ENCODE measurements at regions of chr13 and their contacts with region 1.

Region 1: GRCh38 chr13:30465585-30466357 is at the start of gene HMGB1:
- DNase-seq: peak; percentile 97
- H3K4me3 Mint-ChIP-seq: peak within 1 kb of the TSS; percentile 94
- H3K27ac Mint-ChIP-seq: peak within 1 kb of the TSS; percentile 100
- H3K4me1 Mint-ChIP-seq: peaks cover 28% of the 10 kb centered on the region
- H3K27me3 Mint-ChIP-seq: no peaks in the 10 kb centered on the region
- total RNA-seq, gene HMGB1: 593 and 606 TPM in 2 replicates

Region 2: GRCh38 chr13:29935309-29935981 is 530.3 kb before region 1 on chr13:
- intact Hi-C with region 1: loop called (anchors 1 kb)
- DNase-seq: peak; percentile 82
- H3K4me3 Mint-ChIP-seq: peak overlapping the region; percentile 86
- H3K27ac Mint-ChIP-seq: peak overlapping the region; percentile 95
- H3K4me1 Mint-ChIP-seq: peaks cover 69% of the 10 kb centered on the region
- H3K27me3 Mint-ChIP-seq: no peaks in the 10 kb centered on the region

Region 3: GRCh38 chr13:30306762-30307193 is 159.0 kb before region 1 on chr13:
- intact Hi-C with region 1: loop called (anchors 1 kb)
- DNase-seq: peak; percentile 90
- H3K4me3 Mint-ChIP-seq: peak overlapping the region; percentile 88
- H3K27ac Mint-ChIP-seq: peak overlapping the region; percentile 84
- H3K4me1 Mint-ChIP-seq: peaks cover 65% of the 10 kb centered on the region
- H3K27me3 Mint-ChIP-seq: no peaks in the 10 kb centered on the region

Region 4: GRCh38 chr13:30408319-30409101 is 57.3 kb before region 1 on chr13:
- intact Hi-C with region 1: loop called (anchors 1 kb)
- DNase-seq: peak; percentile 88
- H3K4me3 Mint-ChIP-seq: peak overlapping the region; percentile 72
- H3K27ac Mint-ChIP-seq: peak overlapping the region; percentile 79
- H3K4me1 Mint-ChIP-seq: peaks cover 36% of the 10 kb centered on the region
- H3K27me3 Mint-ChIP-seq: peaks cover 10% of the 10 kb centered on the region

Region 5: DNA sequence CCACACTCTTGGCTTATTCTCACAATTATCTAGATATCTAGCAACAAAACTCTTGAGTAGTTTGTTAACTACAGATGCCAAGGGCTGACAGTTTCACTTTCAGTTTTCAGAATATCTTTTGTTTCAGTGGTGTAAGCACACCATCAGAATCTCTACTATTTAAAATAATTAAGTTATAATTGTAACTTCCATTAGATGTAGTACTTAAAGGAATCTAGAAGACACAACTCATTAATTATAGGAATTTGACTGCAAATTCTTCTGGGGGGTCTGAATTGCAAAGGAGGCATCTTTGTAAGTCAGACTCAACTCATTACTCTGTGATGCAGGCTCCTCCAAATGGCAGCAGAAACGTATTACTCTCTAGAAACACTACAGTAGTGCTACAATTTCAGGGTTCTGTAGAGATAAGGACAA is 107.1 kb after region 1 on chr13:
- intact Hi-C with region 1: loop called (anchors 2 kb)
- DNase-seq: no peak
- H3K4me3 Mint-ChIP-seq: peak overlapping the region; percentile 59
- H3K27ac Mint-ChIP-seq: no peak overlapping the region
- H3K4me1 Mint-ChIP-seq: peaks cover 44% of the 10 kb centered on the region
- H3K27me3 Mint-ChIP-seq: peaks cover 9% of the 10 kb centered on the region

Region 6: DNA sequence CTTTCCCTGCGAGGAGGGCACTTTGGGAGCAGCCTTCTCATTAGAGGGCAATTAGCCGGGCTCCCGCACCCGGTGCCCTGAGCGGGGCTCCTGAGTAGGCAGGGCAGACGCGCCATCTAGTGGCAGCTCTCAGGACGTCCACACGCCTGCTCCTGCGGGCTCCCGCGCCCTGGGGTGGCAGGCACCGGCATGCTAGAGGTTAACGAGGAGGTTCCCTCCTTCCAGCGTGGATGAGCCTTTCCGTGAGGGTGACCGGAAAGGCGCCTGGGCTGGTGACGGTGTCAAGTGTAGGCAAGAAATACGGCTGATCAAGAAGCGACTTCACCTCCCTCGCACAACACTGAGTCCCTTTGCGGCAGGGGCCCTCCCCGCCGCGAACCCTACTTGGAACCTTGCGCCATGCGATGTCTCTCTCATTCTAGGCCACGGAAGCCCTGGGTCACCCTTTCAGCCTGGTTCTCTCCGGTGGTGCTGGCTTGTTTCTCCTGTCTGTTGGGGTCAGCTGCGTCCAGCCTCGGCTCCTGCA is 337.2 kb after region 1 on chr13:
- intact Hi-C with region 1: loop called (anchors 2 kb)
- DNase-seq: peak; percentile 69
- H3K4me3 Mint-ChIP-seq: peak overlapping the region; percentile 47
- H3K27ac Mint-ChIP-seq: no peak overlapping the region
- H3K4me1 Mint-ChIP-seq: peaks cover 28% of the 10 kb centered on the region
- H3K27me3 Mint-ChIP-seq: peaks cover 4% of the 10 kb centered on the region

Region 7: DNA sequence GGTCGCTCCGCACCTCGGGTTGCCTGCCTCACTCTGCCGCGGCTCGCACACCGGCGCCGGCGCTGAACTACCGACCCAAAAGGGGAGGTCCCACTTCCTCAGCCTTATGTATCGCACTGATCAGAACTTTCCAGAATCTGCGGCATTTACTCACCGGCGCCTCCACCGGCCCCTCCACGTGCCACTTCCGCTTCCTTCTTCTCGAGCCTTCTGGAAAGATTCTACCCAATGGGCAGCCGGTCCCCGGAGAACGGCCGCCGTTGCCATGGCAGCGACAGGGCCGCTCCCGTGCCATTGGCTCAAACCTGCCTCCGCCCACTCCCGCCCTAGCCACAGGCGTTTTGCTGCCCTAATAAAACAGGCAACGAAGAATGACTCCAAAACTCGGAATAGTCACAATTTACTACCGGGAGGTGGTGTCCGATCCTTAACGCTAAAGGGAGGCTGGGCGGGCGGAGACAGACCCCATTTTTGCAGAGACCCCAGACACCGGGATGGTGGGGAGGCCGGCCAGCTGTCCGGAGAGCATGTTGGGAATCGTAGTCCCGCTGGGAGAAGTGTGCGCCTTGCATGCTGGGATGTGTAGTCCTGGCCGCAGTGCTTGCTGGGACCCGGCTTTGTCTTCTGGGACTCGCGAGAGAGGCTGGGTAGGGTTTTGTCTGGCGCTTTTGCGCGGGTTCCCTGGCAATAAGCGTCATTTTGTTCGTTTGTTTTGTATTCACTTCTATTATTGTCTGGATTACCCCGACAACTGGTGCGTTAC is 696.2 kb after region 1 on chr13 and contains the start of gene HSPH1:
- intact Hi-C with region 1: loop called (anchors 1 kb)
- DNase-seq: peak; percentile 99
- H3K4me3 Mint-ChIP-seq: peak within 1 kb of the TSS; percentile 98
- H3K27ac Mint-ChIP-seq: peak within 1 kb of the TSS; percentile 96
- H3K4me1 Mint-ChIP-seq: peaks cover 44% of the 10 kb centered on the region
- H3K27me3 Mint-ChIP-seq: no peaks in the 10 kb centered on the region
- total RNA-seq, gene HSPH1: 310 and 326 TPM in 2 replicates

Measured in activated T-helper 1 cell treated with anti-CD3 and anti-CD28 coated beads, Interleukin-12 subunit alpha, Interleukin-12 subunit beta, Interleukin-2, Interleukin-4 antibody, amounts not matched to agents 30 ng/mL and 10 ng/mL and 1 ng/mL, durations not matched to agents 14 hours and 24 hours and 36 hours (primary cell).